Transverse colon (tissue), 4 donors: ENCODE measurements at regions of chr20 and their contacts with region 1.

Region 1: DNA sequence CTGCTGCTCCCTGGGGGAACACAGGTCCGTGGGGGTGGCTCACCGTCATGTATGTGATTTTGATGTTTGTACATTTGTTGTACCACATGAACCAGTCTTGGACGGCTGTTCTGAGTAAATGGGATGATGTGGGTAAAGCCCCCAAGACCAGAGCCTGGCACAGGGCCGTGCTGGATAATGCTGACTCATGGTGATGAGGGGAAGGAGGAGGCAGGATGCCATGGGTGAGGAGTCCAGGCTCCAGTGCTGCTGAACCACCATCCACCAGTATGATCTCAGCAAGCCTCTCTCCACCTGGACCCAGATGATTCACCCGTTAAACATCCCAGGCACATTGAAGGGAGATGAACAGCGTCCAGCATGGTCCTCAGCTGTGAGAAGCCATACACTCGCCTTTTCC is 9.6 kb upstream of the APCDD1L start:
- DNase-seq: no peak
- H3K4me3 ChIP-seq: no peak overlapping the region
- H3K27ac ChIP-seq: no peak overlapping the region
- H3K4me1 ChIP-seq: no peaks in the 10 kb centered on the region
- H3K27me3 ChIP-seq: no peaks in the 10 kb centered on the region
- CTCF ChIP-seq: no peak
- EP300 ChIP-seq: no peak
- POLR2A ChIP-seq: no peak

Region 2: GRCh38 chr20:58557733-58558338 is 33.0 kb after region 1 on chr20:
- in situ Hi-C with region 1: no loop called
- intact Hi-C with region 1: loop called (anchors 1 kb)
- DNase-seq: no peak
- H3K4me3 ChIP-seq: no peak overlapping the region
- H3K27ac ChIP-seq: no peak overlapping the region
- H3K4me1 ChIP-seq: no peaks in the 10 kb centered on the region
- H3K27me3 ChIP-seq: no peaks in the 10 kb centered on the region
- CTCF ChIP-seq: no peak
- EP300 ChIP-seq: no peak
- POLR2A ChIP-seq: no peak